Right ventricle myocardium superior (tissue), 1 donor: ENCODE measurements at regions of chr2 and their contacts with region 1.

Region 1: DNA sequence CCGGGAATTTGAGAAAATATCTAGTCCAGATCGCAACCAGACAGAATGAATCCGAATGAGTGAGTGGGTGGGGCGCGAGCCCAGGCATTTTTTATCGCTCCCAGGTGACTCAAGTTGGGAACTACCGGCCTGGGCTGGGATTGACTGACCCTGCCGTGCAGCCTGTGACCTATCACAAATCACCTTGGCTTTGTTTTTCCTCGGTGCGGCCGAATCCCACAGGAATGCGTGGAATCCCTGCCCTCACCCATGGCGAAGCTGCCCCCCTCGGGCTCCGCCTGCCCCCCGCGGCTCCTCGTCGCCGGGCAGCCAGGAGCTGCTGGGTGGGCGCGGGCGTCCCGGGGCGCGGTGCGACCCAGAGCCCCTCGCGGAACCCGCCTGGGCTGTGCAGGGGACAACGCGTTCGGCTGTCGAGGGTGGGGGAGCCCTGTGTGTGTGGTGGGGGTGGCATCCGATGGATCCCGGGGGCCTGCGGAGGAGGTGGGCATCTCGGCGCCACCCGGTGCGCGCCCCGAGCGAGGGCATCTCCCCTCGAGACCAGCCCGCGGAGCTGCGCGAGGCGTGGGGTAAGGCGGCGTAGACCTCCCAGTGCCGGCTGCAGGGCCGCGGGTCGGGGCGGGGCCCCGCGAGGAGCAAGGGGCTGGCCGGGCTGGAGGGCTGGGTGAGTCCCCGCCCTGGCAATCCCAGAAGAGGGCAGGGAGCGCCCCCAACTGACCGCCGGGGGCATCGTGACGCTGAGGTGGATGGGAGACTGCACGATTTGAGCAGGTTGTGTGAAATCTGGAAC is 16.5 kb downstream of the B3GNT7 start:
- DNase-seq: peak; percentile 90
- ATAC-seq: peak; percentile 99

Region 2: DNA sequence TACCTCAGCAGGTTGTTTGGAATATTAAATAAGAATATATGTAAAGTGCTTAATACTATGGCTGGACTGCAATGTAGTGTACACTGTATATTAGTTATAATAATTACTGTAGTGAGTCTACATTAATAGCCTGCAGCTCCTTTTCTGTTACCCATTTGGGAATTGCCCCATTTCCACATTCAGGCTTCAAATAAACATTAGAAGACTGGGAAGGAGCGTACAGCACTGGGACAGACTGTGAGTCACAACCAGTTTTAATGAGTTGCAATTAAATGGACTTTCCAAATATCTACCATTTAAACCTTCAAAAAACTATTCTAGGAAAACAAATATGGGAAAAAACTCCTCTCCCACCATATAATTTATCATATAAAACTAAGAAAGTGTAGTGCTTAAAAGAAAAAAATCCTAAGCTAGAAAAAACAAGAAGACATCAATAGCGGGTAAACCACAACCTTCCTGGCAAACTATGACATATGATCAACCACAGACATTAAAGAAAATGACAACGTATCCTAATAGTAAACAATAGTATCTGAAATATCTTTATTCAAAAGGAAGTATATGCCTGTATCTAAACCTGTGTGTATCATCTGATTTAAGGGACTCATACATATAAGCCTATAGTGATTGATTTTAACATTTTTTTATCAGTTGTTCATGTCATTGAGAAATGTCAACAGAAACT is 1576.3 kb before region 1 on chr2:
- intact Hi-C with region 1: no loop called
- DNase-seq: no peak
- ATAC-seq: no peak

Region 3: GRCh38 chr2:231104115-231104713 is 307.8 kb before region 1 on chr2:
- intact Hi-C with region 1: loop called (anchors 5 kb)
- DNase-seq: no peak
- ATAC-seq: peak; percentile 88

Region 4: DNA sequence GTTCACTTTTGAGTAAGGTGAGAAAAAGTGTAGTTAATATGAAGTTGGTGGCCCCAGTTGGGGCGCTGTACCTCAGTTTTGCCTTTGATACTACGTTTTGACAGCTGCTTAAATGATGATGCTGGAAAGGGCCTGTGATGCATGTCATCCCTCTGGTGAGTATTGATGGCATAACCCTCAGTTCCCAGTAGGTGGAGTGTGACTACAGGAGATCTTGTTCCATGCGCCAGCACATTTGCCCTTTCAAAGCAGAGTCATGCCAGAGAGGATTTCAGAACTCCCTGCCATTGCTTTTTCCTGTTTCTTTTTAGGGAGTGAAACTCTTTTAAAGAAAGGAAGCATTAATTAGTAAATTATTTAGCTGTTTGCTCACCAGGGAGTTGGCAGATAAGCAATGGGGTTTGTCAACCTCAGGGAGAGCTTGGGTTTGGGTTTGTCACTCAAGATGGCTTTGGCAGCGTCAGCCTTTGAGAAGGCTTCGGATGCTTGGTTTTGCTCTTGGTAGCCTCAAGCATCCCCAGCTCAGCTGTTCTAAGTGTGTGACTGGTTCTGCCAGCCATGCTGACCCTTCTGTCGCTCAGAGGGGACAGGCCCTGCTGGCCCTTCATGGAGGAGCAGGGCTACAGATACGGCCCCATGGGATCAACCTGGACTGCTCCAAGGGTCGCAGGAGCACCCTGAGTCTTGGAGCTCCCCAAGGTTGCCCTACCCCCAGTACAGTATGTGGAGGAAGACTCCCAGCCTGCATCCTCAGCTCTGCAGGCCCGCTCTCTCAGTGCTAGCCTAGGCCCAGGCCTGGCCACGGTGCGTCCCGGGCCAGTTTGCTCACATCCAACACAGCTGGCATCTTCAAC is 184.5 kb before region 1 on chr2:
- intact Hi-C with region 1: loop called (anchors 5 kb)
- DNase-seq: no peak
- ATAC-seq: peak; percentile 97

Region 5: GRCh38 chr2:231241755-231242507 is 170.1 kb before region 1 on chr2:
- intact Hi-C with region 1: loop called (anchors 5 kb)
- DNase-seq: peak; percentile 59
- ATAC-seq: peak; percentile 71